K562 (cell line): ENCODE measurements at regions of chr5 and their contacts with region 1.

Region 1: GRCh38 chr5:923281-923873 is 30.7 kb downstream of the TRIP13 start:
- DNase-seq: peak; percentile 83 to 90 (median 88)
- ATAC-seq: peak; percentile 100
- H3K4me3 ChIP-seq: no peak overlapping the region
- H3K27ac ChIP-seq: no peak overlapping the region
- H3K4me1 ChIP-seq: peaks cover 7 to 20% of the 10 kb centered on the region in 2 experiments; a peak in 3 of 5 replicates
- H3K27me3 ChIP-seq: no peaks in the 10 kb centered on the region
- CTCF ChIP-seq: peak; percentile 95 to 96 (median 96)
- EP300 ChIP-seq: no peak
- POLR2A ChIP-seq: no peak
- RAD21 ChIP-seq: peak; percentile 97 to 99

Region 2: DNA sequence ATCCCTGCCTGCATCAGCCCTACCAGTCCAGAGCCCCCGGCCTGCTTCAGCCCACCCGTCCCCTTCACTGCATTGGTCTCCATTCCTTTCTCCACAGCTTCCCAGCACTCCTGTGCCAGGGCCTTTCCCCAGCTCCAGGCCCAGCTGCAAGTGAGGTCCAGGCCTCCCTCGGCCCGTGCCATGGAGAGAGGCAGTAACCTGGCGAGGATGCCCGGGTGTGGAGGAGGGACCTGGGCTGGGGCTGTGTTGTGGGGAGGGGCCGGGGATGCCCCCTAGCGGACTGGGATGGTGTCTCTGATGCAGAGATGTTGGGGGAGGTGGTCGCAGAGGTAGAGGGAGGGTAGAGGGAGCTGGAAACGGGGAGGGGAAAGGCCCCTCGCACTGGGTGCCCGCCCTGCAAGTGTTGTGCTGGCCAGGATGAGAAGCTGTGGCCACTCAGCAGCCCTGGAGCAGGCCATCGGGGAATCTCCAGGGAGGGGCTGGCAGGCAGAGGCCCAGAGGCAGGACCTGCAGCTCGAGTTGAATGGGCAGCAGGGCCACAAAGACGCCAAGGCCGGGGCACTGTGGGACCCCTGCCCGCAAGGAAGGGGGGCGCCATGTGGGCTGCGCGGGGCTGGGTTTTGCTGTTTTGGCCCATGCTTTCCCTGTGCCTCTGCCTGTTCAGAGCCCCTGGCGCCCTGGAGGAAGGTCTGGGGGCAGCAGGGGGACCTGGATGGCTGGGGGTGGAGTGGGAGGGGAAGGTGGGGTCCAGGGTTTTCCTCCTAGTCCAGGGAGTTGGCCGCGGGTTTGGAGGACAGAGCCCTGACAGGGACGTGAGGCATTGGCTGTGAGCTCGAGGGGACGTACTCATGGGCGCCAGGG is 59.2 kb after region 1 on chr5:
- CTCF ChIA-PET with region 1: no interaction called
- POLR2A ChIA-PET with region 1: no interaction called
- in situ Hi-C with region 1: no loop called
- intact Hi-C with region 1: loop called (anchors 5 kb)
- DNase-seq: peak; percentile 52 to 71 (median 67)
- ATAC-seq: peak; percentile 94
- H3K4me3 ChIP-seq: no peak overlapping the region
- H3K27ac ChIP-seq: no peak overlapping the region
- H3K4me1 ChIP-seq: peaks cover 0 to 12% of the 10 kb centered on the region in 2 experiments; a peak in 1 of 5 replicates
- H3K27me3 ChIP-seq: peaks cover 28 to 42% of the 10 kb centered on the region in 2 experiments
- CTCF ChIP-seq: peak; percentile 47 to 61 (median 50)
- EP300 ChIP-seq: no peak
- POLR2A ChIP-seq: no peak
- RAD21 ChIP-seq: peak; percentile 45 to 53

Region 3: GRCh38 chr5:1008451-1009358 is 85.3 kb after region 1 on chr5 and contains the start of gene NKD2:
- CTCF ChIA-PET with region 1: interaction called, 6 read pairs
- POLR2A ChIA-PET with region 1: no interaction called
- in situ Hi-C with region 1: no loop called
- intact Hi-C with region 1: loop called (anchors 2 kb)
- DNase-seq: peak; percentile 53 to 92 (median 87)
- ATAC-seq: peak; percentile 63
- H3K4me3 ChIP-seq: no peak within 1 kb of the TSS; the same call in 1 of the 2 replicates
- H3K27ac ChIP-seq: no peak within 1 kb of the TSS
- H3K4me1 ChIP-seq: peaks cover 0 to 54% of the 10 kb centered on the region in 2 experiments; a peak in 3 of 5 replicates
- H3K27me3 ChIP-seq: peaks cover 41 to 84% of the 10 kb centered on the region in 2 experiments
- CTCF ChIP-seq: peak; percentile 52 to 72 (median 54); a peak in 5 of 6 replicates
- EP300 ChIP-seq: no peak
- POLR2A ChIP-seq: no peak
- RAD21 ChIP-seq: no peak; a peak in 1 of 4 replicates
- polyA plus RNA-seq, gene NKD2: not detected